Dorsolateral prefrontal cortex (tissue), 120 donors: ENCODE measurements at regions of chr4 and their contacts with region 1.

Region 1: DNA sequence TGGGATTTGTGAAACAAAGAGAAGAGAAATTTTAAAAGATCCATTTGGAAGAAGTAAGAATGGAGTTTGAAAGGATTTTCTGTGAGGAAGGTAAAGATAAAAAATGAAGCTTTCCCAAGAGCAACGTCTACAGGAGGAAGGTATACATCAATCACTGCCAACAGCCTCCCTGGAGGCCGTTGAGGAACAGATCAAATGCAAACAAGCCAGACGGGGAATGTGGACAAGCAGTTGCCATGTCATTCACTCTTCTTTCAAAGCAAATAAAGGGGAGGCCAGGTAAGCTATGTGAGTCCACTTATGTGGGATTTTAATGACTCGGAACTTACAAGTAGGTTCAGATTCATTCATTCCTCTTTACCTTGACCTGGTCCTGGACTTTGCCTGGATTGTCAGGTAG is 1020.5 kb upstream of the AGA start:
- DNase-seq: no peak
- H3K4me3 ChIP-seq: no peak overlapping the region
- H3K27ac ChIP-seq: no peak overlapping the region
- H3K27me3 ChIP-seq: no peaks in the 10 kb centered on the region
- CTCF ChIP-seq: no peak

Region 2: DNA sequence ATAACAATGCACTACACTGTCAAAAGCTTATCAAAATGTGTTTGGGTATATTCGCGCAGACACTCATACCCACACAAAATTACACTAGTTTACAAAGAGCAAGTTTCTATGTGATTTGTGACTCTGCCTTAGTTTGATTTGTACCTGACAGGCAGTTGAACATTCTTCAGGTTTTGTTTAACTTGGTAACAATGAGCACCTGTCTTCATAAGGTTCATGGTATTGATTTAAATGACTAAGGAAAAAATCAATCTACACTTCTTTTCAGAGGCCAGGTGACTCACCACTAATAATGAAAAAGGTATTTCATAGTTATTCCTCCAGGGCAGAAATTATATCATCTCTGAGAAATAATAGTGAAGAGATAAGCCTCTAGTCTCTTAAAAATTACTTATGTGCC is 94.1 kb after region 1 on chr4:
- intact Hi-C with region 1: loop called in 1 of 2 experiments (anchors 10 kb)
- DNase-seq: no peak
- H3K4me3 ChIP-seq: no peak overlapping the region
- H3K27ac ChIP-seq: no peak overlapping the region
- H3K27me3 ChIP-seq: peaks cover 0 to 5% (median 0%) of the 10 kb centered on the region in 45 donors
- CTCF ChIP-seq: no peak